ENCODE measurements at regions of chr1 and their contacts with region 1.

Region 1: DNA sequence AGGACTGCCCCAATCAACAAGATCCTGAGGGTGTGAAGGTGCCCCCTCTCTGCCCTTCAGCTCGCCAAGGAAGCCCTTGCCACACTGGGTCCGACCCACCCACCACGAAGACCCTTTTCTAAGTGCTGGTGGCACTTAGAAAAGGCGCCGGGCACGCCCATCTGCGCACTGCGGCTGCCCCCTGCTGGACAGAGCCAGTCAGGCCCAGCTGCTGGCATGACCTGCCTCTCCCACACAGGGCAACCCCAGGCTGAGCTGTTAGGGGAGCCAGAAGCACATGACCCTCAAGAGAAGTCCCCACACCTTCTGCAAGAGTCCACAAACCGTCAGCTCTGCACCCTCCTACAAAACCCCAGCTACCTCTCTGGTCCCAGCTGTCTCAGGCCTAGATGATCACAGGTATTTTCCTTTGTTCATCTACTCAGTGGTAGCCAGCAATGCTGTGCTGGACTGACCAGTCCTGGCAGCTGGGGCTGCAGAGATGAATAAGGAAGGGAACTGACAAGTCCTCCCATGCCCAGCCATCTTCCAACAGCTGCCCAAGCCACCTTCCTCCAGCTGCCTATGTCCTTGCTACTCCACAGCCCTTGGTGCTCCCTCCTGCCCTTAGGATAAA is 40.0 kb upstream of the ZC3H12A start:
- DNase-seq: no peak
- ATAC-seq: peak; percentile 98
- H3K4me3 ChIP-seq: no peak overlapping the region
- H3K27ac ChIP-seq: no peak overlapping the region
- H3K4me1 ChIP-seq: no peaks in the 10 kb centered on the region
- H3K27me3 ChIP-seq: peaks cover 0 to 1% of the 10 kb centered on the region in 2 experiments; a peak in 1 of 4 replicates
- CTCF ChIP-seq: peak; percentile 91 to 99 (median 95)
- EP300 ChIP-seq: no peak
- POLR2A ChIP-seq: no peak
- RAD21 ChIP-seq: peak; percentile 80

Region 2: GRCh38 chr1:36239941-36240637 is 1194.3 kb before region 1 on chr1:
- CTCF ChIA-PET with region 1: no interaction called
- POLR2A ChIA-PET with region 1: no interaction called
- RAD21 ChIA-PET with region 1: no interaction called
- SMC1A ChIA-PET with region 1: no interaction called
- in situ Hi-C with region 1: no loop called
- intact Hi-C with region 1: no loop called
- DNase-seq: no peak
- ATAC-seq: peak; percentile 15; the same call in 1 of the 3 replicates
- H3K4me3 ChIP-seq: no peak overlapping the region
- H3K27ac ChIP-seq: no peak overlapping the region
- H3K4me1 ChIP-seq: no peaks in the 10 kb centered on the region
- H3K27me3 ChIP-seq: no peaks in the 10 kb centered on the region
- CTCF ChIP-seq: no peak
- EP300 ChIP-seq: no peak
- POLR2A ChIP-seq: no peak
- RAD21 ChIP-seq: no peak

Region 3: DNA sequence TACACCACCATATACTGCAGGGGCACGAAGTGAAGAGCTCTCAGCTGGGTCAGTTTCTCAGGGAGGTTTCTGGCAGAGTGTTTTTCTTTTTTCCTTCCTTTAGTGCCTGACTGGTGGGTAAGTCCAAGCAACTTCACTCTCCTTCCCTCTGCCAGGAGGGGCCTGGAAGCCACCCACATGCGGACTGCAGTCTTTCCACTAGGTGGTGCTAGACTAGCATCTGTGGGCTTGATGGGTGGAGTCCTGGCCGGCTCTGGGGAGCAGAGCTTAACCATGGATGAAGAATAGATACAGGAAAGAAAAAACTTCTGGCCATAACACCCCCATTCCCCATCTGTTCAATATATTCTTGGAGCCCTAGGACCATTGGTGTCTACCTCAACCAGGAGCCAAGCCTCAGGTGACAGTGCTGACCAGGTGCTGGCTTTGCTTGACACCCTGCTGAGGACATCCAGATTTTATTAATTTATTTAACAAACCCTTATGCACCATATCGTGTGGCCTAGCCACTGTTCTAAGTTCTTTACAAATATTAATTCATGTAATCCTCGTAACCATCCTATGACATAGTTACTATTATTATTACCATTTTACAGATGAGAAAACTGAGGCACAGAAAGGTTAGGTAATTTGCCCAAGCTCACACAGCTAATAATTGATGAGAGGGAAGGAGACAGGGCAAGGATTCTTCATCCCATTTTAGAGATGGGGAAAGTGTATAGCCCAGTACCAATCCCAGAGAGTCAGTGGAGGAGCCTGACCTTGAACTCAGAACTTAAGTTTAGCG is 825.0 kb before region 1 on chr1:
- CTCF ChIA-PET with region 1: interaction called, 3 read pairs
- POLR2A ChIA-PET with region 1: no interaction called
- RAD21 ChIA-PET with region 1: no interaction called
- SMC1A ChIA-PET with region 1: no interaction called
- in situ Hi-C with region 1: no loop called
- intact Hi-C with region 1: loop called (anchors 1 kb)
- DNase-seq: no peak
- ATAC-seq: peak; percentile 97
- H3K4me3 ChIP-seq: no peak overlapping the region
- H3K27ac ChIP-seq: no peak overlapping the region
- H3K4me1 ChIP-seq: no peaks in the 10 kb centered on the region
- H3K27me3 ChIP-seq: no peaks in the 10 kb centered on the region; a peak in 1 of 4 replicates
- CTCF ChIP-seq: peak; percentile 65 to 87 (median 86)
- EP300 ChIP-seq: no peak
- POLR2A ChIP-seq: no peak
- RAD21 ChIP-seq: peak; percentile 61

Region 4: DNA sequence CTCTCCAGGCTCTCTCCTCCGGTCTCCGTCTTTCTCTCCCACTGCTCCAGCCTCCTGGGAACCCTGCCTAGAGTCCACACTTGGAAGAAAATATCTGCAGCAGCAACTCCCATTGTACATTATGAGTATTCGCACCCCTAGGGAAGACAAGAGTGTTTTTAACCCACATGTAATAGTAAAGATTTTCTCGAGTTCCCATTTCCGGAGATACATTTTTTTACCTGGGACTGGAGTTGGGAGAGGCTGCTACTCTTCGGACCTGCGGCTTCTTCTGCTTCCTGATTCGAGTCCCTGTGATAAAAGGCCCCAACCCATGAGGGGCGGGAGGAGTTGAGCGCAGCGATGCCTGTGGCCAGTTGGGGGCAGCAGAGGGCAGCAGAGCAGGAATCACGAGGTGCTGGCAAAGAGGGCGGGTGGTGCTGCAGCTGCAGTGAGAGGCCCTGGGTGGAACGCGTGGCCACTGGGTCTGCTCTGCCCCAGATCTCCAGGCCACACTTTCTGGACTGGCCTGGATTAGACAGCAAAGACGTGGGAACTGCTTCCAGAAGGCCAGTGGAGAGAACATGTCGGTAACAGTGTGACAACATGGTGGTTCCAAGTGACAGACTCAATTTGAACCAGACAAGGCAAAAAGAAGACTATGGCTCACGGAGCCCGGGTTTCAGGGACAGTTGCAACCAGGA is 730.7 kb before region 1 on chr1:
- CTCF ChIA-PET with region 1: interaction called, 6 read pairs
- POLR2A ChIA-PET with region 1: no interaction called
- RAD21 ChIA-PET with region 1: no interaction called
- SMC1A ChIA-PET with region 1: no interaction called
- in situ Hi-C with region 1: loop called (anchors 5 kb)
- intact Hi-C with region 1: loop called (anchors 1 kb)
- DNase-seq: peak; percentile 5
- ATAC-seq: peak; percentile 100
- H3K4me3 ChIP-seq: no peak overlapping the region
- H3K27ac ChIP-seq: no peak overlapping the region
- H3K4me1 ChIP-seq: no peaks in the 10 kb centered on the region
- H3K27me3 ChIP-seq: peaks cover 0 to under 1% of the 10 kb centered on the region in 2 experiments; a peak in 2 of 4 replicates
- CTCF ChIP-seq: peak; percentile 87 to 93 (median 91)
- EP300 ChIP-seq: no peak
- POLR2A ChIP-seq: no peak
- RAD21 ChIP-seq: peak; percentile 85

Region 5: DNA sequence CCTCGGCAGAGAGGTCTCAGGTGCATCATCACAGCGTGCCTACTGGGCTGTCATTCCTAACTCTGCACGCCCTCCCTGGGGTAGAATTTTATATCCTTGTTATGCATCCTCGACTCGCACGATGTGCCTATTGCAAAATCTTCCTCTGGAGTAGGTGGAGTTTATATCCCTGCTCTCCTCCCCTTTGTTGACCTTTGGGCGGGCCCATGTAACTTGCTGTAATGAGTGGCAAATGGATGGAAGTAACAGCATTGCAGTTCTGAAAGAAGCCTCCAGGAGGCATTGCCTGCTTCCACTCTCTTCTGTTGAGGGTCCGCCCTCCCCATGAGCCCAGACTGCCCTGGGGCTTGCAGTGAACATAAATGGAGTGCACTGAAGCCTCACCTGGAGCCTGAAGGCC is 337.9 kb before region 1 on chr1:
- CTCF ChIA-PET with region 1: no interaction called
- POLR2A ChIA-PET with region 1: no interaction called
- RAD21 ChIA-PET with region 1: no interaction called
- SMC1A ChIA-PET with region 1: no interaction called
- in situ Hi-C with region 1: no loop called
- intact Hi-C with region 1: loop called (anchors 1 kb)
- DNase-seq: no peak
- ATAC-seq: peak; percentile 57
- H3K4me3 ChIP-seq: no peak overlapping the region
- H3K27ac ChIP-seq: no peak overlapping the region
- H3K4me1 ChIP-seq: peaks cover 5% of the 10 kb centered on the region; the same call in 1 of the 2 replicates
- H3K27me3 ChIP-seq: no peaks in the 10 kb centered on the region
- CTCF ChIP-seq: peak; percentile 26 to 48 (median 40)
- EP300 ChIP-seq: no peak
- POLR2A ChIP-seq: no peak
- RAD21 ChIP-seq: peak; percentile 42; the same call in 1 of the 2 replicates

Region 6: DNA sequence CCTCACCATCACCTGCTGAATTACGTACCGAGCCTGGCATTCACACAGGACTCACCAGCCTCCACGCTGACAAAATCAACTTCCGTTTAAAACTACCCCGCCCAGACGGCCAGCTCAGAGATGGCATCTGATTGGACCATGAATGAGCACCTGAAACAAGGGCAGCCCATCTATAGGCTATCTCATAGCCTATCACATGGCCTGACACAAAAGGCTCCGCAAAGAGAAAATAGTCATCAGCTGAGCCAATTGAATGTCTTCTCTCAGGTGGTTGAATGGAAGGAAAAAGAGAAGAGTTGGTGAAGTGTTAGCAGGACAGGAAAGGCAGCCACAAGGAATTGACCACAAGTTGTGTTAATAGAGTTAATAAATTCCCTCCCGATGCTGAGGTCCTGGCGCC is 10.6 kb before region 1 on chr1:
- CTCF ChIA-PET with region 1: interaction called, 14 read pairs
- POLR2A ChIA-PET with region 1: no interaction called
- RAD21 ChIA-PET with region 1: no interaction called
- SMC1A ChIA-PET with region 1: interaction called, 3 read pairs
- in situ Hi-C with region 1: no loop called
- intact Hi-C with region 1: no loop called
- DNase-seq: no peak
- ATAC-seq: peak; percentile 61
- H3K4me3 ChIP-seq: no peak overlapping the region
- H3K27ac ChIP-seq: no peak overlapping the region
- H3K4me1 ChIP-seq: no peaks in the 10 kb centered on the region
- H3K27me3 ChIP-seq: peaks cover 0 to 1% of the 10 kb centered on the region in 2 experiments; a peak in 1 of 4 replicates
- CTCF ChIP-seq: no peak
- EP300 ChIP-seq: no peak
- POLR2A ChIP-seq: no peak
- RAD21 ChIP-seq: no peak

Measured in GM12878 (cell line).